Naive thymus-derived CD4-positive, alpha-beta T cell (primary cell): ENCODE measurements at regions of chr19 and their contacts with region 1.

Region 1: DNA sequence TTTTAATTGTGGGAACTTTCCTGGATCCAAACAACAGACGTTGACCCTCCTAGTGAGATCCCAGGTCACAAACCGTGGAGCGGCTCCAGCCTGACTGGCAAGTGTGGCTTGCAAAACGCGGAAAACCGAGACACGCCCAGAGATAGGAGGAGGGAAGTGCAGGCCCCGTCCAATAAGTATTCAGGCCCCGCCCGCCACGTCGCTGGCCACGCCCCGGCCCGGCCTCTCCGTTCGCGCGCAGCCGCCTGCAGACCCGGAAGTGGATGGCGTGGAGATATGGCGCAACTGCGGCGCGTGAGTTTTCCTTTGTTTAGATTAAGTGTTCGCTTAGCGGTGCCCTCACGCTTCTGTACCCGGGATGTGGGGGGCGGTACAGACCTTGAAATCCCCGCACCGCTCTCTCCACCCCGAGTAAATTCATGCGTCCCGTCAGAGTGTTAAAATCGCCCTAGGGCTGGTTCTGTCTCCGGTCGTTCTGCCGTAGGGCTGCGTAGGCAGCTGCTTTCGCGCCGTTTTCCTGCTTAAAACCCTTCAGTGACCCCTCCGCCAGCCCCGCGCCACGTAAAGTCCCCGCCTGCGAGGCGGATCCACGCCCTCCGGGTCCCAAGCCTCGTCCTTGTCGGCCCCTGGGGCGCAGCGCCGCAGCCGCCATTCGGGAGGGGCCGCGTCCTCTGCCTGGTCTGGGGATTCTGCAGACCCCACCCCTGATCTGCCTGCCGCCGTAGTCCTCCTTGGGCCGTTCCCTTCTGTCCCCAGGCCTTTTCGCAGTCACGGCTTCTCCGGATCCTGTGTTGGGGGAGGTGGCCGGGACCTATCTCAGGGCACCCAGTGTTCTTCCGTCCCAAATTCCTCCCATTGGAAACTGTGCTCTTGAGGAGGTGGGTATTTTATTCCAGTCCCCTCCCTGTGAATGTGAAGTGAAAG is at the start of gene ZNF766:
- DNase-seq: peak; percentile 94 to 97 (median 96)
- ATAC-seq: peak; percentile 100
- H3K4me3 ChIP-seq: peak within 1 kb of the TSS; percentile 94
- H3K4me3 Mint-ChIP-seq: peak within 1 kb of the TSS; percentile 94 to 100 (median 96)
- H3K27ac ChIP-seq: peak within 1 kb of the TSS; percentile 93
- H3K27ac Mint-ChIP-seq: peak within 1 kb of the TSS; percentile 87 to 97 (median 95)
- H3K4me1 ChIP-seq: peaks cover 15 to 16% of the 10 kb centered on the region in 2 donors
- H3K4me1 Mint-ChIP-seq: peaks cover 20 to 53% (median 45%) of the 10 kb centered on the region in 7 donors
- H3K27me3 ChIP-seq: no peaks in the 10 kb centered on the region
- H3K27me3 Mint-ChIP-seq: no peaks in the 10 kb centered on the region
- total RNA-seq, gene ZNF766: 24.7 to 59.6 (median 41.4) TPM

Region 2: DNA sequence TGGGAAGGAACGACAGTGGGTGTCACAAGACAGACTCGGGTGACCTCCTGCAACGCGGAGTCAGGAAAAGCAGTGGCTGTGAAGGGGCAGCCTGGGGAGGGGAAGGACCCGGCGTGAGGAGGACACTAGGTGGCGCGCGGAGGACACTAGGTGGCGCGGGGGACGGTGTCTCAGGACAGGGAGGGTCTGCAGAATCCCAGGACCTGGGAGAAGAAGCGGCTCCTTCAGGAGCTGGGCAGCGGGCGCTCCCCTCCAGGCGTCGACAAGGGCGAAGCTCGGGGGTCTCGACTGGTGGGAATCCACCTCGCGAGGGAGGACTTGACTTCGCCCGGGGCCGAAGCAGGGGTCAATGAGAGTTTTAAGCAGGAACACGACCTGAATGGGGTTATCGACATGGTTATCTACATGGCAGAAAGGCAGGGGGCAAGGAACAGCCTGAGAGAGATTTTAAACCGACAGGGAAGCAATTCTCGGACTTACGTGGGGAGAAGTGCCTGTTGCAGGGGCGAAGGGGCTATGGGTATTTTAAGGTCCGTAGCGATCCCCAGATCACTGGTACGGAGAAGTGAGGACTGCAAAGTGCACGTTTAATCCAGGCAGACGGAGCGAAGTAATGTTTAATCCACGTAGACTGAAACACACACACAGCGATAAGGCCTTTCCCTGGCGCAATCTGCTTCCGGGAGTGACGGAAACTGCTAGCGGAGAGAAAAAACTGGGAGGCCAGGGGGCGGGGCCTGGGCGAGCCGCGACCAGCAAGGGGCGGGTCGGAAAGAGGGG is 130.2 kb before region 1 on chr19 and contains the start of gene ZNF616:
- CTCF ChIA-PET with region 1: no interaction called
- POLR2A ChIA-PET with region 1: no interaction called
- intact Hi-C with region 1: loop called (anchors 1 kb)
- DNase-seq: peak; percentile 58 to 97 (median 95)
- ATAC-seq: peak; percentile 74
- H3K4me3 ChIP-seq: peak within 1 kb of the TSS; percentile 99
- H3K4me3 Mint-ChIP-seq: peak within 1 kb of the TSS; percentile 92 to 99 (median 96)
- H3K27ac ChIP-seq: peak within 1 kb of the TSS; percentile 89
- H3K27ac Mint-ChIP-seq: peak within 1 kb of the TSS; percentile 88 to 98 (median 96)
- H3K4me1 ChIP-seq: peaks cover 15 to 18% of the 10 kb centered on the region in 2 donors
- H3K4me1 Mint-ChIP-seq: peaks cover 20 to 44% (median 33%) of the 10 kb centered on the region in 7 donors
- H3K27me3 ChIP-seq: no peaks in the 10 kb centered on the region
- H3K27me3 Mint-ChIP-seq: no peaks in the 10 kb centered on the region
- total RNA-seq, gene ZNF616: 2.8 to 18.5 (median 6.1) TPM

Region 3: DNA sequence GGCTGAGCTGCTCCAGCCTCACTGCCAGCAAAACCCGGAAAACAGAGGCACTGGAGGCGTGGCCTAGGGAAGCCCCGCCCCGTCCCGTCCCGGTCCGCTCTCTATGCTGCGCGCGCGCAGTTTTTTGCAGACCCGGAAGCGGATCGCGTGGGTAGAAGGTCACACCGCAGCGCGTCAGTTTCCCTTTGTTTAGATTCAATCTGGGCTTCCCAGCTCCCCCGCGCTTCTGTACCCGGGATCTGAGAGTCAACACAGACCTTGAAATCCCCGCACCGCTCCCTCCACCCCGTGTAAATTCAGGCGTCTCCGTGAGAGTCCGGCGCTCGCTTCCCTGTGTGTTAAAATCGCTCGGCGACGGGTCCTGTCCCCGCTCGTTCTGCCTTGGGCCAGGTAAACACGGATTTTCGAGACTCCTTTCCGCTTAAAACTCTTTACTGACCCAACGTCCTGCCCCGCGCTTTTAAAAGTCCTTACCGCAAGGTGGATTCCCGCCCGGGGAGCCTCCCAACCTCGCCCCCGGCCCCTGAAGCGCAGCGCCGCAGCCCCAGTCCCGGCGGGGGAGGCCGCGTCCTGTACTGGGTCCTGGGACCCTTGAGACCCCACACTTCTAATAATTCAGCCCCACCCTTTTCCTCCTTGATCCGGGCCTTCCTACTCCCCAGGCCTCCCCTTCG is 66.7 kb after region 1 on chr19 and contains the start of gene ZNF610:
- CTCF ChIA-PET with region 1: no interaction called
- POLR2A ChIA-PET with region 1: no interaction called
- intact Hi-C with region 1: loop called in 1 of 2 experiments (anchors 2 kb)
- DNase-seq: peak; percentile 73 to 88 (median 85)
- ATAC-seq: peak; percentile 99
- H3K4me3 ChIP-seq: peak within 1 kb of the TSS; percentile 88
- H3K4me3 Mint-ChIP-seq: peak within 1 kb of the TSS; percentile 87 to 97 (median 93)
- H3K27ac ChIP-seq: peak within 1 kb of the TSS; percentile 83
- H3K27ac Mint-ChIP-seq: peak within 1 kb of the TSS; percentile 81 to 98 (median 96)
- H3K4me1 ChIP-seq: peaks cover 0 to 6% of the 10 kb centered on the region in 2 donors
- H3K4me1 Mint-ChIP-seq: peaks cover 11 to 19% (median 16%) of the 10 kb centered on the region in 7 donors
- H3K27me3 ChIP-seq: no peaks in the 10 kb centered on the region
- H3K27me3 Mint-ChIP-seq: no peaks in the 10 kb centered on the region
- total RNA-seq, gene ZNF610: 0.42 to 4.3 (median 0.93) TPM

Region 4: GRCh38 chr19:52527134-52527955 is 257.7 kb after region 1 on chr19 and contains the start of gene ZNF808:
- CTCF ChIA-PET with region 1: no interaction called
- POLR2A ChIA-PET with region 1: no interaction called
- intact Hi-C with region 1: loop called in 1 of 2 experiments (anchors 1 kb)
- DNase-seq: peak; percentile 79 to 95 (median 90)
- ATAC-seq: peak; percentile 99
- H3K4me3 ChIP-seq: peak within 1 kb of the TSS; percentile 99
- H3K4me3 Mint-ChIP-seq: peak within 1 kb of the TSS; percentile 91 to 100 (median 98)
- H3K27ac ChIP-seq: peak within 1 kb of the TSS; percentile 91
- H3K27ac Mint-ChIP-seq: peak within 1 kb of the TSS; percentile 84 to 99 (median 98)
- H3K4me1 ChIP-seq: peaks cover 9 to 12% of the 10 kb centered on the region in 2 donors
- H3K4me1 Mint-ChIP-seq: peaks cover 18 to 34% (median 25%) of the 10 kb centered on the region in 7 donors
- H3K27me3 ChIP-seq: no peaks in the 10 kb centered on the region
- H3K27me3 Mint-ChIP-seq: no peaks in the 10 kb centered on the region
- total RNA-seq, gene ZNF808: 17.7 to 52.4 (median 33.7) TPM

Region 5: DNA sequence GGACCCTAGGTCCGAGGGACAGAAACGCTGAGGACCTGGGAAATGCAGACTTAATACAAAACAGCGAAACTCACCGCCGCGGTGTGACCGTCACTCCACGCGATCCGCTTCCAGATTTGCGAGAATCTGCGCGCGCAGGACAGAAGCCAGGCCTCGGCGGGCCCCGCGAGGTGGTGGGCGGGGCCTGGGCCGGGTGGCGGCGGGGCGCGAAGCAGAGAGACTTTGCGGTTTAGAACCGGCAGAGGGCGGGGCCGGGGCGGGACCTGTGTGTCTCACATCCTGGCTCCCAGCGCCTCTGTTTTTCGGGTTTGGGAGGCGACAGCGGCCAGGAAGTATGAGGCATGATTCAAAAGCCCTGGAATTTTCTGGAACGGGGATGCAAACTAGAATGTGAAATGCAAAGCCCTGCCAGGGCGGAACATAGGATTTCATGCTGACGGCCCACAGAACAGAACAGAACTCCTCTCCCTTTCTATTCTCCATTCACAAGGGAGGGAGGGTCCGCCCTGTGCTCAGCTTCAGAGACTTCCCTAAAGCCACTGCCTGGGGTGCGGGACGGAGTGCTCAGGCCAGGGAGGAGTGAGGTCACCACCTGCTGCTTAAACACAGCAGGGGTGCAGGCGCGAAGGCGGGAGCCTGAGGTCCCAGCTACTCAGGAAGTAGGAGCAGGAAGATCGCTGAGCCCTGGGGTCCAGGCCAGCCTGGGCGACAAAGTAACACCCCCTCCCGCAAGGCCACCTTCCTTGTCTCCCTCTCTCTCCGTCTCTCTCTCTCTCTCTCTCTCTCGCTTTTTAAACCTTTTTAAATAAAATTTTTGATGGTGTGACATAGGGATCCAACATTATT is 421.0 kb after region 1 on chr19:
- CTCF ChIA-PET with region 1: no interaction called
- POLR2A ChIA-PET with region 1: no interaction called
- intact Hi-C with region 1: loop called in 1 of 2 experiments (anchors 1 kb)
- DNase-seq: peak; percentile 81 to 91 (median 87)
- ATAC-seq: peak; percentile 99
- H3K4me3 ChIP-seq: peak overlapping the region; percentile 80
- H3K4me3 Mint-ChIP-seq: peak overlapping the region; percentile 92 to 99 (median 96)
- H3K27ac ChIP-seq: peak overlapping the region; percentile 85
- H3K27ac Mint-ChIP-seq: peak overlapping the region; percentile 89 to 97 (median 94)
- H3K4me1 ChIP-seq: peaks cover 6 to 9% of the 10 kb centered on the region in 2 donors
- H3K4me1 Mint-ChIP-seq: peaks cover 18 to 33% (median 30%) of the 10 kb centered on the region in 7 donors
- H3K27me3 ChIP-seq: no peaks in the 10 kb centered on the region
- H3K27me3 Mint-ChIP-seq: no peaks in the 10 kb centered on the region

Region 6: DNA sequence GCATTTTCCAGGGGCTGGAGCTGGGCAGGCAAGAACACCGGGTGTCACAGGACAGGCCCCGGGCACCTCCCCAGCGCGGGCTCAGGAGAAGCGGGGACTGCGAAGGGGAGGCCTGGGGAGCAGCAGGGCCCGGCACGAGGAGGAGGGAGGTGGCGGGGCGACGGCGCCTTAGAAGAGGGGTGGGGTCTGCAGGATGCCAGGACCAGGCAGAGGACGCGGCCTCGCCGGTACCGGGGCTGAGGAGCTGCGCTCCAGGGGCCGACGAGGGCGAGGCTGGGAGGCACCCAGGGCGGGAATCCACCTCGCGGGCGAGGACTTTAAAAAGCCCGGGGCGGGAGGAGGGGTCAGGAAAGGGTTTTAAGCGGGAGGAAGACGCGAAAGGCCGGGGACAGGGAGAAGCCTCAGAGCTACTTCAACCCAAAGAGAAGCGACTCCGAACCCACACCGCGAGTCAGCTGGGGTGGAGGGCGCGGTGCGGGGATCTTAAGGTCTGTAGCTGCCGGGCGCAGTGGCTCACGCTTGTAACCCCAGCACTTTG is 888.6 kb after region 1 on chr19:
- CTCF ChIA-PET with region 1: no interaction called
- POLR2A ChIA-PET with region 1: no interaction called
- intact Hi-C with region 1: loop called in 1 of 2 experiments (anchors 2 kb)
- DNase-seq: peak in 5 of 9 donors; percentile 9 to 41 (median 26)
- ATAC-seq: peak; percentile 35
- H3K4me3 ChIP-seq: peak overlapping the region; percentile 97
- H3K4me3 Mint-ChIP-seq: peak overlapping the region; percentile 65 to 91 (median 86)
- H3K27ac ChIP-seq: peak overlapping the region; percentile 70
- H3K27ac Mint-ChIP-seq: peak overlapping the region; percentile 44 to 90 (median 85)
- H3K4me1 ChIP-seq: peaks cover 4 to 7% of the 10 kb centered on the region in 2 donors
- H3K4me1 Mint-ChIP-seq: peaks cover 12 to 32% (median 27%) of the 10 kb centered on the region in 7 donors
- H3K27me3 ChIP-seq: no peaks in the 10 kb centered on the region
- H3K27me3 Mint-ChIP-seq: no peaks in the 10 kb centered on the region